Mammary epithelial cell (primary cell): ENCODE measurements at regions of chr17 and their contacts with region 1.

Region 1: GRCh38 chr17:6279659-6280058 is 155.3 kb downstream of the AIPL1 start:
- DNase-seq: peak; percentile 88
- H3K4me3 ChIP-seq: no peak overlapping the region
- H3K27ac ChIP-seq: no peak overlapping the region
- H3K4me1 ChIP-seq: no peaks in the 10 kb centered on the region
- H3K27me3 ChIP-seq: no peaks in the 10 kb centered on the region
- CTCF ChIP-seq: peak; percentile 89 to 94

Region 2: DNA sequence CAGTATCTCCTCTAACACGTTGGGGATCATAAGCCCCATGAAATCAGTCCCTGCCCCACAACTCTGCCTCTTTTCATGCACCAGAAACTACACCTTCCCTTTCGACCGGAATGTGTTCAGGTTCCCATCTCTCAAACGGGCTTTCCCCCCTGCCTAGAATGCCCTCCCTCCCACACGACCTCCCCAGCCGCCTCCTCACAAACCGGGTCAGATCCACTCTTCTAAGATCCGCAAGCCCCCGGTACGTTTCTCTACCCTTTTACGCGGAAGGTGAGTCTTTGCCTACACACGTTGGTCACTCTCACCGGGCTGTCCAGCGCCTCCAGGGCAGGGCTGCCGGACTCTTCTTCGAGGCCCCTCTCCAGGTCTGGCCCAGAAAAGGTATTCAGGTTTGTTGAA is 811.6 kb before region 1 on chr17:
- CTCF ChIA-PET with region 1: interaction called, 10 read pairs
- dilution Hi-C with region 1: no loop called
- in situ Hi-C with region 1: no loop called
- intact Hi-C with region 1: no loop called
- DNase-seq: peak; percentile 16
- H3K4me3 ChIP-seq: peak overlapping the region; percentile 87 to 92 (median 87)
- H3K27ac ChIP-seq: peak overlapping the region; percentile 54
- H3K4me1 ChIP-seq: peaks cover 10% of the 10 kb centered on the region
- H3K27me3 ChIP-seq: no peaks in the 10 kb centered on the region
- CTCF ChIP-seq: no peak

Region 3: GRCh38 chr17:5706577-5707216 is 573.0 kb before region 1 on chr17:
- CTCF ChIA-PET with region 1: no interaction called
- dilution Hi-C with region 1: no loop called
- in situ Hi-C with region 1: no loop called
- intact Hi-C with region 1: loop called (anchors 2 kb)
- DNase-seq: peak; percentile 26
- H3K4me3 ChIP-seq: no peak overlapping the region
- H3K27ac ChIP-seq: no peak overlapping the region
- H3K4me1 ChIP-seq: no peaks in the 10 kb centered on the region
- H3K27me3 ChIP-seq: peaks cover 8% of the 10 kb centered on the region
- CTCF ChIP-seq: peak; percentile 62 to 68

Region 4: GRCh38 chr17:5793899-5794298 is 485.8 kb before region 1 on chr17:
- CTCF ChIA-PET with region 1: no interaction called
- dilution Hi-C with region 1: no loop called
- in situ Hi-C with region 1: no loop called
- intact Hi-C with region 1: loop called (anchors 2 kb)
- DNase-seq: peak; percentile 33
- H3K4me3 ChIP-seq: no peak overlapping the region
- H3K27ac ChIP-seq: no peak overlapping the region
- H3K4me1 ChIP-seq: no peaks in the 10 kb centered on the region
- H3K27me3 ChIP-seq: peaks cover 7% of the 10 kb centered on the region
- CTCF ChIP-seq: peak; percentile 34 to 65

Region 5: DNA sequence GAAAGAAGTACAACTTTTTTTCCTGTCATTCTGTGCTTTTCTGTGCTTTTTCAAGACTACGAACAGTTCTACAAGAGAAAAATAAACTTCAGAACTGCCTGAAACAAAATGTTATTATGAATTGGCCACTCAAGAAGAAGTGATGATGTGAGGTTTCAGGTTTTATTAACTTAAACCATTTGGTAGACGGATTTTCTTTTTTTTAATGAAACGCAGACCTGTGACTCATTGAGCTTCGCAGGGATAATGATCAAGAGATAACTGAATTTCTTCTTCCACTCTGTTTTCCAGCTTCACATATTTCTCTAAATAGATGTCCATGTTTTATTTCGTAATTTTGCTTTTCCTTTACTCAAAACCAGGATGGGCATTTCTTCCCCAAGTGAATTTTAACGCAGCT is 122.6 kb after region 1 on chr17:
- CTCF ChIA-PET with region 1: no interaction called
- dilution Hi-C with region 1: no loop called
- in situ Hi-C with region 1: loop called in 1 of 2 experiments (anchors 10 kb)
- intact Hi-C with region 1: no loop called
- DNase-seq: no peak
- H3K4me3 ChIP-seq: no peak overlapping the region
- H3K27ac ChIP-seq: no peak overlapping the region
- H3K4me1 ChIP-seq: no peaks in the 10 kb centered on the region
- H3K27me3 ChIP-seq: peaks cover 1% of the 10 kb centered on the region
- CTCF ChIP-seq: no peak

Region 6: GRCh38 chr17:6421700-6422604 is 142.3 kb after region 1 on chr17:
- CTCF ChIA-PET with region 1: no interaction called
- dilution Hi-C with region 1: no loop called
- in situ Hi-C with region 1: no loop called
- intact Hi-C with region 1: loop called (anchors 1 kb)
- DNase-seq: peak; percentile 70
- H3K4me3 ChIP-seq: no peak overlapping the region
- H3K27ac ChIP-seq: no peak overlapping the region
- H3K4me1 ChIP-seq: no peaks in the 10 kb centered on the region
- H3K27me3 ChIP-seq: no peaks in the 10 kb centered on the region
- CTCF ChIP-seq: peak; percentile 71 to 95